B cell (primary cell): ENCODE measurements at regions of chr20 and their contacts with region 1.

Region 1: DNA sequence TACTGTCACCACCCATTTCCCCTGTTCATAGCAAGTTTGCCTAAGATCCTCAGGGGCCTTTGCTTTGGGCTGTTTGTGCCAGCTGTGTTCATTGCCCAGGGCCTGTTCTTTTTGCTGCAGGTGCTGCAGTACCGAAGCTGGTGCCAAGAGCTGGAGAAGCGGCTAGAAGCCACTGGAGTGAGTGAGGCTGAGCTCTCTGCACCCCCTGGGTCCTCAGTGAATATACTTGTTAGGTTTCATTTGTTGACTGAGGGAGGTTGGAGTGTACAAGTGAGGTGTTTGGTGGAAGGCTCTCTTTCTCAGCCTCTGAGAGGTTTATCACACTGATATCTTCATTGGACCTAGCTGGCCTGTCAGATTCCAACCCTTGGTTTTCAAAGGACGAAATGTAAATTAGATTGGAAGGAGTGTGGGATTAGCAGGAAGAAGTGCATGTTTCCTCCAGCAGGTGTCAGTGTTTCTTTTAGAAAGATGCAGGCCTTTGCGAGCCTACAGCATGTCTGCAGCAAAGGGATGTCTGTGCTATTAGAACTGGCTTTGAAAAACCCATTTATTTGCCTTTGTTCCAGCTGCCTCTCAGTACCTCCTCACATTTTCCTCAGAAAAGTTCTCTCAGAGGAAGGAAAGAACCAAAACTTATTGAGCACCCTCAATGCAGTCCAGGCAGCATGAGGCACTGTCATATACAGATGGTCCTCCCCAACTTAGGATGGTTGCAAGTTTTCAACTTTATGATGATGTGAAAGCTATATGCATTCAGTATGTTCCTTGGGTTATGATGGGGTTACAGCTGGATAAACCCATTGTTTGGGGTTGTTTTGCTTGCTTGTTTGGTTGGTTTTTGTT is 8.3 kb downstream of the CEP250 start:
- DNase-seq: peak; percentile 80
- ATAC-seq: peak; percentile 77
- H3K4me3 ChIP-seq: no peak overlapping the region
- H3K4me3 Mint-ChIP-seq: no peak overlapping the region
- H3K27ac ChIP-seq: no peak overlapping the region
- H3K27ac Mint-ChIP-seq: peak overlapping the region; percentile 32
- H3K4me1 ChIP-seq: peaks cover 9 to 17% of the 10 kb centered on the region in 2 donors
- H3K4me1 Mint-ChIP-seq: peaks cover 15% of the 10 kb centered on the region
- H3K27me3 ChIP-seq: no peaks in the 10 kb centered on the region
- H3K27me3 Mint-ChIP-seq: no peaks in the 10 kb centered on the region
- CTCF ChIP-seq: peak; percentile 89

Region 2: GRCh38 chr20:35478804-35479472 is 15.3 kb after region 1 on chr20:
- CTCF ChIA-PET with region 1: interaction called, 22 read pairs
- POLR2A ChIA-PET with region 1: no interaction called
- intact Hi-C with region 1: no loop called
- DNase-seq: peak; percentile 58
- ATAC-seq: peak; percentile 68
- H3K4me3 ChIP-seq: no peak overlapping the region
- H3K4me3 Mint-ChIP-seq: no peak overlapping the region
- H3K27ac ChIP-seq: peak overlapping the region in 1 of 2 donors; percentile 18
- H3K27ac Mint-ChIP-seq: peak overlapping the region; percentile 48
- H3K4me1 ChIP-seq: peaks cover 0 to 10% of the 10 kb centered on the region in 2 donors
- H3K4me1 Mint-ChIP-seq: peaks cover 6% of the 10 kb centered on the region
- H3K27me3 ChIP-seq: no peaks in the 10 kb centered on the region
- H3K27me3 Mint-ChIP-seq: no peaks in the 10 kb centered on the region
- CTCF ChIP-seq: peak; percentile 4

Region 3: GRCh38 chr20:35502352-35502751 is 38.7 kb after region 1 on chr20:
- CTCF ChIA-PET with region 1: interaction called, 15 read pairs
- POLR2A ChIA-PET with region 1: no interaction called
- intact Hi-C with region 1: no loop called
- DNase-seq: peak; percentile 86
- ATAC-seq: peak; percentile 94
- H3K4me3 ChIP-seq: no peak overlapping the region
- H3K4me3 Mint-ChIP-seq: peak overlapping the region; percentile 54
- H3K27ac ChIP-seq: peak overlapping the region in 1 of 2 donors; percentile 68
- H3K27ac Mint-ChIP-seq: peak overlapping the region; percentile 84
- H3K4me1 ChIP-seq: peaks cover 44 to 53% of the 10 kb centered on the region in 2 donors
- H3K4me1 Mint-ChIP-seq: peaks cover 57% of the 10 kb centered on the region
- H3K27me3 ChIP-seq: no peaks in the 10 kb centered on the region
- H3K27me3 Mint-ChIP-seq: no peaks in the 10 kb centered on the region
- CTCF ChIP-seq: no peak

Region 4: GRCh38 chr20:35601008-35601973 is 137.6 kb after region 1 on chr20:
- CTCF ChIA-PET with region 1: interaction called, 14 read pairs
- POLR2A ChIA-PET with region 1: no interaction called
- intact Hi-C with region 1: loop called (anchors 1 kb)
- DNase-seq: peak; percentile 88
- ATAC-seq: peak; percentile 78
- H3K4me3 ChIP-seq: peak overlapping the region in 4 of 5 experiments; percentile 40 to 77 (median 58)
- H3K4me3 Mint-ChIP-seq: peak overlapping the region; percentile 89
- H3K27ac ChIP-seq: no peak overlapping the region
- H3K27ac Mint-ChIP-seq: no peak overlapping the region
- H3K4me1 ChIP-seq: peaks cover 16 to 17% of the 10 kb centered on the region in 2 donors
- H3K4me1 Mint-ChIP-seq: peaks cover 12% of the 10 kb centered on the region
- H3K27me3 ChIP-seq: peaks cover 0 to 40% (median 15%) of the 10 kb centered on the region in 4 experiments
- H3K27me3 Mint-ChIP-seq: peaks cover 44% of the 10 kb centered on the region
- CTCF ChIP-seq: peak; percentile 48

Region 5: GRCh38 chr20:35883778-35884540 is 420.3 kb after region 1 on chr20:
- CTCF ChIA-PET with region 1: interaction called, 92 read pairs
- POLR2A ChIA-PET with region 1: no interaction called
- intact Hi-C with region 1: no loop called
- DNase-seq: peak; percentile 68
- ATAC-seq: peak; percentile 84
- H3K4me3 ChIP-seq: no peak overlapping the region
- H3K4me3 Mint-ChIP-seq: no peak overlapping the region
- H3K27ac ChIP-seq: peak overlapping the region in 1 of 2 donors; percentile 16
- H3K27ac Mint-ChIP-seq: peak overlapping the region; percentile 22
- H3K4me1 ChIP-seq: no peaks in the 10 kb centered on the region
- H3K4me1 Mint-ChIP-seq: peaks cover 7% of the 10 kb centered on the region
- H3K27me3 ChIP-seq: no peaks in the 10 kb centered on the region
- H3K27me3 Mint-ChIP-seq: no peaks in the 10 kb centered on the region
- CTCF ChIP-seq: peak; percentile 72